ENCODE measurements at regions of chr3 and their contacts with region 1.

Region 1: GRCh38 chr3:39288300-39288808 is 8.5 kb upstream of the CX3CR1 start:
- DNase-seq: peak; percentile 91
- H3K4me3 Mint-ChIP-seq: no peak overlapping the region
- H3K27ac Mint-ChIP-seq: peak overlapping the region; percentile 13
- H3K4me1 Mint-ChIP-seq: peaks cover 24% of the 10 kb centered on the region
- H3K27me3 Mint-ChIP-seq: no peaks in the 10 kb centered on the region

Region 2: GRCh38 chr3:39000008-39000450 is 288.3 kb before region 1 on chr3:
- CTCF ChIA-PET with region 1: interaction called, 17 read pairs
- POLR2A ChIA-PET with region 1: no interaction called
- intact Hi-C with region 1: loop called (anchors 1 kb)
- DNase-seq: no peak
- H3K4me3 Mint-ChIP-seq: no peak overlapping the region
- H3K27ac Mint-ChIP-seq: no peak overlapping the region
- H3K4me1 Mint-ChIP-seq: no peaks in the 10 kb centered on the region
- H3K27me3 Mint-ChIP-seq: peaks cover 2% of the 10 kb centered on the region

Region 3: DNA sequence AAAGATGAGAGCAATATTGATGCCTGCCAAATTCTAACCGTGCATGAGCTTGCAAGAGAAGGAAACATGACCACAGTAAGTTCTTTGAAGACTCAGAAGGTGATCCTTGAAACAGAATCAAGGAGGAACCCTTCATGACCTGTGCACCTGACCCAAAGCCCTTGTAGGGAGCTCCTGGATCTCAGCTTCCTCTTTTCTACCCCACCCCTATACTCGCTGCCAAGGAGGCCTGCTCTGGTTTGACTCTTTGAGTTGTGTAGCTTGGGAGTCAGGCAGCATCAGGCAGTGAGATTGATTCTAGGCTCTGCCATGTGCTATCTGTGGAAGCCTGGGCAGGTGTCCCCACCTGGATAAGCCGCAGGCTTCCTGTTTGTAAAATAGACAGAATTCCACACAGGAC is 170.3 kb before region 1 on chr3:
- CTCF ChIA-PET with region 1: interaction called, 173 read pairs
- POLR2A ChIA-PET with region 1: no interaction called
- intact Hi-C with region 1: no loop called
- DNase-seq: no peak
- H3K4me3 Mint-ChIP-seq: no peak overlapping the region
- H3K27ac Mint-ChIP-seq: no peak overlapping the region
- H3K4me1 Mint-ChIP-seq: no peaks in the 10 kb centered on the region
- H3K27me3 Mint-ChIP-seq: no peaks in the 10 kb centered on the region

Region 4: GRCh38 chr3:39189959-39190269 is 98.4 kb before region 1 on chr3:
- CTCF ChIA-PET with region 1: interaction called, 587 read pairs
- POLR2A ChIA-PET with region 1: interaction called, 9 read pairs
- intact Hi-C with region 1: loop called (anchors 1 kb)
- DNase-seq: peak; percentile 70
- H3K4me3 Mint-ChIP-seq: no peak overlapping the region
- H3K27ac Mint-ChIP-seq: no peak overlapping the region
- H3K4me1 Mint-ChIP-seq: peaks cover 19% of the 10 kb centered on the region
- H3K27me3 Mint-ChIP-seq: no peaks in the 10 kb centered on the region

Region 5: GRCh38 chr3:39260957-39261356 is 27.4 kb before region 1 on chr3:
- CTCF ChIA-PET with region 1: interaction called, 18 read pairs
- POLR2A ChIA-PET with region 1: no interaction called
- intact Hi-C with region 1: no loop called
- DNase-seq: peak; percentile 73
- H3K4me3 Mint-ChIP-seq: no peak overlapping the region
- H3K27ac Mint-ChIP-seq: peak overlapping the region; percentile 50
- H3K4me1 Mint-ChIP-seq: peaks cover 28% of the 10 kb centered on the region
- H3K27me3 Mint-ChIP-seq: peaks cover 4% of the 10 kb centered on the region

Region 6: DNA sequence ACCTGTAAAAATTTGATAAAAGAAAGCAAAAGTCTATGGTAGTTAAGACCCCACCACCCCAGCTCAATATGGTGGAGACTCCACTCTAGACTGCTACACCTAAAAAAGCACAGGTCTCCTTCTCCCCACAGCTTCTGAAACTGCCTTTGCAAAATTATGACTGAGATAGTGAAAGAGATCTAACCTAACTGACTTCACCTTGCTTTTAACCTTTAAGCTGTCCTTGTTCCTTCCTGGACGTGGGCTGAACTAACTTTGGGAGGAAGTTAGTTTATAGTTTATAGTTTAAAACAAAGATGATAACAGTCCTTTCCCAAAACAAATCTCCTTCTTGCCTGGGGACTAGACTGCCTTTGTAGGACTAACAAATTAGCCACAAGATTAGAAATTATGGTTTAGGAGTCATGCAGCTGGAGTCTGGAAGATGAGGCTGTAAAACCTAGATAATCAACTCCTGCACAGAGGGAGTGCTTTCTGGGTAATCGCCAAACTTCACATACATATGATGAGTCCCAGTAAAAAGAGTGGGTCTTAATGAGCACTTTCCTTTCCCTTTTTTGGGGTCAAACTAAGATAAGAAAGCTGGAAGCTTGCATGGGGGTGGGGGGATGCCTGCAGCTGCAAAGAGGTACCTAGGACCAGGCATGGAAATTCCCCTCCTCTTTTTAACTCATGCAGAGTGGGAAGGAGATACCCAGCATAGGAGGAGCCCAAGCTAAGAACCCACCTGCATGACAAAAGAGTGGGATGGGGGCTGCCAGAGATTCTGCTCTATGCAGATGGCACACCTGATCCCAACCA is 58.6 kb after region 1 on chr3:
- CTCF ChIA-PET with region 1: interaction called, 25 read pairs
- POLR2A ChIA-PET with region 1: no interaction called
- intact Hi-C with region 1: no loop called
- DNase-seq: no peak
- H3K4me3 Mint-ChIP-seq: no peak overlapping the region
- H3K27ac Mint-ChIP-seq: peak overlapping the region; percentile 11
- H3K4me1 Mint-ChIP-seq: peaks cover 36% of the 10 kb centered on the region
- H3K27me3 Mint-ChIP-seq: no peaks in the 10 kb centered on the region